HCT116 (cell line): ENCODE measurements at regions of chr4 and their contacts with region 1.

Region 1: DNA sequence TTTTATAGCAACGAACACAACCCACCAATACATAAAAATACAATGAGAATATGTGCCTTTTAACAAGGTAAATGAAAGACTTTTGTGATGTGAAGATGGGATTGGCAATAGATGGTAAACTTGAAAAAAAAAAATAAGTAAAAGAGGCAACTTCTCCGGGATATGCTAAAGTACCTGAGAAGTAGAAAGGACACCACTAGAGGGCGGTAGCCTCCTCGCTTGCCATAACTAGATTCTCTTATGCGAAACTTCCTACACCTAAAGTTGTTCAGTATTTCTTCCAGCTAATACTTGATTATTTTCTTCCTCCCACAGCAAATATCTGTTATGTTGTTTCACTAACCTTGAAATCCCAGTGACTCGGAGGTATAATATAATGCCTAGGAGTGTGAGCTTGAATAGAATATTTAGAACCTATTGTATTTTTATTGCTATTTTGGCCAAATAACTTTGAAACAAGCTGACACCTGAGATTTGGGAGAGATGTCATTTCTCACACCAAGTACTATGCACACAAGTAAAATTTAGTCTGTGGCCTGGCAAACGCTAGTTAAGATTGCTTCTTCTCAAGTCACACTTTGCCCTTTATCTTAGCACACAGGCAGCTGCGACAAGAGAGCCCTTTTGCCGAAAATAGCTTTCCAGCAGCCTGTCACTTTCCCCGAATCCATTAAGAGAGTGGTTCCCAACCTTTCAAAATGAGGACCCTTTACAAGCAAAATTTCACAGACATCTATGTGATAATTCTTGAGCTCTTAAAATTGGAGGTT is 44.9 kb upstream of the PDLIM5 start:
- DNase-seq: peak; percentile 73
- ATAC-seq: peak; percentile 89
- H3K4me3 ChIP-seq: no peak overlapping the region
- H3K27ac ChIP-seq: no peak overlapping the region
- H3K4me1 ChIP-seq: peaks cover 18 to 19% of the 10 kb centered on the region in 2 experiments
- H3K27me3 ChIP-seq: no peaks in the 10 kb centered on the region
- CTCF ChIP-seq: peak; percentile 76 to 85 (median 81)
- POLR2A ChIP-seq: no peak
- RAD21 ChIP-seq: peak; percentile 90

Region 2: DNA sequence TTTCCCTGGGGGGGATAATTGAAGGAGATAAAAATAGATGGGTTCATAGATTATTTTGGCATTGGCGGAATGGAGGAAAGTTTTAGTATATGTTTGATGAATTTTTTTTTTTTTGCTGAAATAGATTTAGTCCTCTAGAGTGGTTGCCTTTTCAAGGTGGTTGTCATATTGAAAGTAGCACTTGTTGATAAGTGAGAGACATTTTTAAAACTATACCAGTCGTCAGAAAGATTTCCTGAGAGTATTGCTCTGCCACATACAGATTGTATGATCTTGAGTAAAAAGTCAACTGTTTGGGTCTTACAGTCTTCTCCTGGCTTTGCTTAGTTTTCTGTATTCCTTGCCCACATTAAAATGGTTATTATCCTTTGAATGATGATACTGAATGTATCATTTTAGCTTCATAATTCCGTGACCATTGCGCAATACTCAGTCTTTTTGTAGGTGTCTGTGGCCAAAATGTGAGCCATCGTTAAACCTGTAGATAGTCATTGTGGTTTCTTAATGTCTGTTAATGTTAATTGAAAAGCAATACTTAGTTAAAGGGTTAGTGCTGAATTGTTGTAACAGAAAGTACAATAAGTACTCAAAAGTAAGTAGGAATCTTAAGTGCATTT is 192.0 kb before region 1 on chr4:
- CTCF ChIA-PET with region 1: no interaction called
- POLR2A ChIA-PET with region 1: no interaction called
- RAD21 ChIA-PET with region 1: no interaction called
- intact Hi-C with region 1: no loop called
- DNase-seq: no peak
- ATAC-seq: no peak
- H3K4me3 ChIP-seq: no peak overlapping the region
- H3K27ac ChIP-seq: no peak overlapping the region
- H3K4me1 ChIP-seq: no peaks in the 10 kb centered on the region
- H3K27me3 ChIP-seq: no peaks in the 10 kb centered on the region
- CTCF ChIP-seq: no peak
- POLR2A ChIP-seq: no peak
- RAD21 ChIP-seq: no peak

Region 3: DNA sequence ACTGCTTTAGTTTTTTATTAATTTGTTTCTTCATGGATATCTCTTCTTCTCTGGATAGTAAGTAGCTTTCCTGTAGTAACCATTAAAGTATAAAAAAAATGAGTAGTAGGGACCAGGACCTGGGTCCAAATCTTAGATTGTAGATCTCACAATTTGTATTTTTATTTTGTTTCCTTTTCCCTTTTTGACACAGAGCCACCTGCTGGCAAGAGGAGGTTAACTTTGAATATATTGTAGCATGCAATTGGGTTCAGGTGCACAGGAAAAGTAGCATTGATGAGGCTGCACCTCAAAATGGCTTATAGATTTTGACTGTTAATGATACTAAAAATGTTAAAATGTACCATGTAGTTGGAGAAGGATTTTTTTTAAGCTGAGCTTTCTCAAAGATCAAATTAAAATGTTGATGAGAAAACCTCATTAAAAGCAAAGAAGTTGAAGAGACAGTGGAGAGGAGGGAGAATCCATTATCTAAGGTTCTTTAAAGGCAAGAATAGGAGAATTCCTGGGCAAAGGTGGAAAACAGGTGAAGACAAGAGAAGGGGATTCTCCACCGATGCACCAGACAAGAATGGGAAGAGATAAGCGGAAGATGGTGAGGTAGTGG is 15.9 kb before region 1 on chr4:
- CTCF ChIA-PET with region 1: interaction called, 10 read pairs
- POLR2A ChIA-PET with region 1: no interaction called
- RAD21 ChIA-PET with region 1: interaction called in 1 of 2 experiments, 3 read pairs
- intact Hi-C with region 1: no loop called
- DNase-seq: no peak
- ATAC-seq: peak; percentile 61; the same call in 1 of the 2 replicates
- H3K4me3 ChIP-seq: no peak overlapping the region
- H3K27ac ChIP-seq: no peak overlapping the region
- H3K4me1 ChIP-seq: no peaks in the 10 kb centered on the region
- H3K27me3 ChIP-seq: no peaks in the 10 kb centered on the region
- CTCF ChIP-seq: peak; percentile 40 to 67 (median 52); a peak in 5 of 6 replicates
- POLR2A ChIP-seq: no peak
- RAD21 ChIP-seq: peak; percentile 54

Region 4: GRCh38 chr4:94595879-94596483 is 189.1 kb after region 1 on chr4:
- CTCF ChIA-PET with region 1: interaction called, 12 read pairs
- POLR2A ChIA-PET with region 1: no interaction called
- RAD21 ChIA-PET with region 1: no interaction called
- intact Hi-C with region 1: loop called (anchors 1 kb)
- DNase-seq: peak; percentile 32
- ATAC-seq: peak; percentile 74
- H3K4me3 ChIP-seq: no peak overlapping the region
- H3K27ac ChIP-seq: no peak overlapping the region
- H3K4me1 ChIP-seq: no peaks in the 10 kb centered on the region; a peak in 1 of 4 replicates
- H3K27me3 ChIP-seq: no peaks in the 10 kb centered on the region
- CTCF ChIP-seq: peak; percentile 38 to 74 (median 63); a peak in 5 of 6 replicates
- POLR2A ChIP-seq: no peak
- RAD21 ChIP-seq: peak; percentile 86

Region 5: GRCh38 chr4:94714365-94715160 is 307.7 kb after region 1 on chr4:
- CTCF ChIA-PET with region 1: no interaction called
- POLR2A ChIA-PET with region 1: no interaction called
- RAD21 ChIA-PET with region 1: no interaction called
- intact Hi-C with region 1: loop called (anchors 10 kb)
- DNase-seq: no peak
- ATAC-seq: no peak
- H3K4me3 ChIP-seq: no peak overlapping the region
- H3K27ac ChIP-seq: no peak overlapping the region
- H3K4me1 ChIP-seq: no peaks in the 10 kb centered on the region
- H3K27me3 ChIP-seq: no peaks in the 10 kb centered on the region
- CTCF ChIP-seq: no peak
- POLR2A ChIP-seq: no peak
- RAD21 ChIP-seq: no peak